ENCODE measurements at regions of chr16 and their contacts with region 1.

Region 1: DNA sequence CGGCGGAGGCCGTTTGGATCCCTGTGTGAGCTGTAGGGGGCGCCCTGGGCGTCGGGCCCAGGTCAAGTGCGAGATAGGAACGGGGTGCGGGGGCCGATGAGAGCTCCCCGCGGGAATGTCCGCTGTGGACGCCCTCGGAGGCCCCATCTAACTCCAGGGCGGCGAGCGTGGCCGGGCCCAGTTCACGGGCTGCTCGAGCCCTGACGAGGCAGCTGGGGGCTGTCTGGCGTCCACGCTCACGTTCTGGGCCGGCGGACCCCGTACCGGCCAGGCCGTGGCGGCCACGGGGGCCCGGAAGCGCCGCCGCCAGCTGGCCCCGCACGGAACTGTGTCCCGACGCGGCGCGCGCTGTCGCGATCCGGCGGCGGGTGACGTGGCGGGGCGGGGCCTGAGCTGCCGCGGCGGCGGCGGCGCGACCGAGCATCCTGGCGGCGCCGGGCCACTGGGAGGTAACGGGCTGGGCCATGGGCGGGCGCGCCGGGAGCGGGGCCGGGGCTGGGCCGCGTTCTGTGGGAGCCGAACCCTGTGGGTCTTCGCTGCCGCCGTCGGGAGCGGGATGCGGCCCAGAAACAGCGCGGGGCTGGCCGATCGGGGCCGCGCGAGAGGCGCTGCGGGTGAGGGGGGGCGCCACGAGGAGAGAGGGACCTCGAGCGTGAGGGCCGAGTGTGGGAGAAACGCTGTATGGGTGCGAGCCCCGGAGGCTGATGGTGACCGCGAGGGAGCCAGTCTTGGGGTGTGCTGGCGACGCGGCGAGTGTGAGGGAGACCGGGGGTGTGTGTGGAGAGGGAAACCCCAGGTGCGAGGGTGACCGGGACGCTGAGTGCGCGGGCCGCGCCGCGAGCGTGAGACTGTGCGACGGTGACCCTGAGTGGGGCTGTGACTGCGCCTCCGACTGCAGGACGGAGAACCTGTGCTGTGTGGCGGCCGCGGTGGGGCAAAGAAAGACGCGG is at the start of gene SLC7A6:
- DNase-seq: peak; percentile 89
- ATAC-seq: peak; percentile 74
- H3K4me3 ChIP-seq: peak within 1 kb of the TSS; percentile 63 to 91 (median 86)
- H3K4me3 Mint-ChIP-seq: peak within 1 kb of the TSS; percentile 99
- H3K27ac ChIP-seq: peak within 1 kb of the TSS; percentile 92 to 97
- H3K27ac Mint-ChIP-seq: peak within 1 kb of the TSS; percentile 99
- H3K4me1 ChIP-seq: peaks cover 20 to 45% of the 10 kb centered on the region in 2 donors
- H3K4me1 Mint-ChIP-seq: peaks cover 43% of the 10 kb centered on the region
- H3K27me3 ChIP-seq: no peaks in the 10 kb centered on the region
- H3K27me3 Mint-ChIP-seq: no peaks in the 10 kb centered on the region
- CTCF ChIP-seq: peak; percentile 79
- total RNA-seq, gene SLC7A6: 70.5 and 73.8 TPM in 2 replicates

Region 2: GRCh38 chr16:68237243-68238028 is 27.0 kb before region 1 on chr16:
- CTCF ChIA-PET with region 1: interaction called, 32 read pairs
- POLR2A ChIA-PET with region 1: no interaction called
- intact Hi-C with region 1: loop called (anchors 1 kb)
- DNase-seq: peak; percentile 88
- ATAC-seq: peak; percentile 81
- H3K4me3 ChIP-seq: peak overlapping the region; percentile 58 to 76 (median 68)
- H3K4me3 Mint-ChIP-seq: peak overlapping the region; percentile 98
- H3K27ac ChIP-seq: no peak overlapping the region
- H3K27ac Mint-ChIP-seq: peak overlapping the region; percentile 83
- H3K4me1 ChIP-seq: peaks cover 22 to 42% of the 10 kb centered on the region in 2 donors
- H3K4me1 Mint-ChIP-seq: peaks cover 39% of the 10 kb centered on the region
- H3K27me3 ChIP-seq: no peaks in the 10 kb centered on the region
- H3K27me3 Mint-ChIP-seq: no peaks in the 10 kb centered on the region
- CTCF ChIP-seq: no peak

Region 3: GRCh38 chr16:68251832-68252231 is 12.6 kb before region 1 on chr16:
- CTCF ChIA-PET with region 1: interaction called, 65 read pairs
- POLR2A ChIA-PET with region 1: interaction called, 6 read pairs
- intact Hi-C with region 1: no loop called
- DNase-seq: no peak
- ATAC-seq: peak; percentile 73
- H3K4me3 ChIP-seq: no peak overlapping the region
- H3K4me3 Mint-ChIP-seq: no peak overlapping the region
- H3K27ac ChIP-seq: peak overlapping the region; percentile 58 to 62
- H3K27ac Mint-ChIP-seq: peak overlapping the region; percentile 21
- H3K4me1 ChIP-seq: peaks cover 26 to 27% of the 10 kb centered on the region in 2 donors
- H3K4me1 Mint-ChIP-seq: peaks cover 24% of the 10 kb centered on the region
- H3K27me3 ChIP-seq: no peaks in the 10 kb centered on the region
- H3K27me3 Mint-ChIP-seq: no peaks in the 10 kb centered on the region
- CTCF ChIP-seq: no peak

Region 4: GRCh38 chr16:68281368-68282063 is 17.1 kb after region 1 on chr16:
- CTCF ChIA-PET with region 1: interaction called, 289 read pairs
- POLR2A ChIA-PET with region 1: interaction called, 38 read pairs
- intact Hi-C with region 1: loop called (anchors 1 kb)
- DNase-seq: no peak
- ATAC-seq: no peak
- H3K4me3 ChIP-seq: no peak overlapping the region
- H3K4me3 Mint-ChIP-seq: peak overlapping the region; percentile 14
- H3K27ac ChIP-seq: peak overlapping the region in 1 of 2 donors; percentile 92
- H3K27ac Mint-ChIP-seq: peak overlapping the region; percentile 84
- H3K4me1 ChIP-seq: peaks cover 52 to 68% of the 10 kb centered on the region in 2 donors
- H3K4me1 Mint-ChIP-seq: peaks cover 60% of the 10 kb centered on the region
- H3K27me3 ChIP-seq: no peaks in the 10 kb centered on the region
- H3K27me3 Mint-ChIP-seq: no peaks in the 10 kb centered on the region
- CTCF ChIP-seq: no peak

Region 5: GRCh38 chr16:68298907-68299561 is 34.6 kb after region 1 on chr16:
- CTCF ChIA-PET with region 1: interaction called, 185 read pairs
- POLR2A ChIA-PET with region 1: interaction called, 3 read pairs
- intact Hi-C with region 1: no loop called
- DNase-seq: no peak
- ATAC-seq: no peak
- H3K4me3 ChIP-seq: no peak overlapping the region
- H3K4me3 Mint-ChIP-seq: no peak overlapping the region
- H3K27ac ChIP-seq: no peak overlapping the region
- H3K27ac Mint-ChIP-seq: no peak overlapping the region
- H3K4me1 ChIP-seq: no peaks in the 10 kb centered on the region
- H3K4me1 Mint-ChIP-seq: no peaks in the 10 kb centered on the region
- H3K27me3 ChIP-seq: no peaks in the 10 kb centered on the region
- H3K27me3 Mint-ChIP-seq: no peaks in the 10 kb centered on the region
- CTCF ChIP-seq: no peak

Region 6: DNA sequence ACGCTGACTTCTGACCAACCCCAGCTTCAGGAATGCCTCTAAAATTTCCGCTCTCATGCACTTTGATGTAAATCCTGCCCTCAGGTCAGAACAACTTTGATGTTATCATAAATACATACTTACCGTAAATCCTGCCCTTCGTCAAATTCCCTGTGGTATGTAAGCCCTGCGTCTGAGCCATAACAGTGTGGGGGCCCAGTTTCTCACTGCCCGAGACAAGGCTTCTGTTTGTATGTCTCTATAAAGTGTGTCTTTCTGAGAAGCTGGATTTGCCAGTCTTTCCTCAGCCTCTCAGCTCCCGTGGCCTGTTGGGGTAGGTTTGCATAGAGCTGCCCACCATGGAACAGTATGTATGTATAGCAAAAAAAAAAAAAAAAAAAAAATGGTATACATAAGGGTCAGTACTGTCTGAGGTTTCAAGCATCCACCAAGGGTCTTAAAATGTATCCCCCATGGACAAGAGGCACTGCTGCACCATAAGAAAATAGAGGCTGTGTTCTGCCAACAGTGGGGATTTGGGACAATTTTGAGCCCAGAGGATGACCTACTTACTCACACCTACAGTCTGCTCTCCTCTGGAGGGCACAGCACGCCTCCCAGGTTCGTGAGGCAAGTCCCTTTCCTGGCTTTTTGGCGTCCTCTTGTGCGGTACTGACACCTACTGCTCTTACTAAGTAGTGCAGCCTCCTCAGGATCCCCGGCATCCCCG is 63.9 kb after region 1 on chr16:
- CTCF ChIA-PET with region 1: interaction called, 554 read pairs
- POLR2A ChIA-PET with region 1: interaction called, 4 read pairs
- intact Hi-C with region 1: loop called (anchors 1 kb)
- DNase-seq: peak; percentile 86
- ATAC-seq: peak; percentile 99
- H3K4me3 ChIP-seq: no peak overlapping the region
- H3K4me3 Mint-ChIP-seq: no peak overlapping the region
- H3K27ac ChIP-seq: no peak overlapping the region
- H3K27ac Mint-ChIP-seq: no peak overlapping the region
- H3K4me1 ChIP-seq: peaks cover 11 to 16% of the 10 kb centered on the region in 2 donors
- H3K4me1 Mint-ChIP-seq: peaks cover 14% of the 10 kb centered on the region
- H3K27me3 ChIP-seq: no peaks in the 10 kb centered on the region
- H3K27me3 Mint-ChIP-seq: no peaks in the 10 kb centered on the region
- CTCF ChIP-seq: peak; percentile 96